PC-3 (cell line): ENCODE measurements at regions of chr3 and their contacts with region 1.

Region 1: DNA sequence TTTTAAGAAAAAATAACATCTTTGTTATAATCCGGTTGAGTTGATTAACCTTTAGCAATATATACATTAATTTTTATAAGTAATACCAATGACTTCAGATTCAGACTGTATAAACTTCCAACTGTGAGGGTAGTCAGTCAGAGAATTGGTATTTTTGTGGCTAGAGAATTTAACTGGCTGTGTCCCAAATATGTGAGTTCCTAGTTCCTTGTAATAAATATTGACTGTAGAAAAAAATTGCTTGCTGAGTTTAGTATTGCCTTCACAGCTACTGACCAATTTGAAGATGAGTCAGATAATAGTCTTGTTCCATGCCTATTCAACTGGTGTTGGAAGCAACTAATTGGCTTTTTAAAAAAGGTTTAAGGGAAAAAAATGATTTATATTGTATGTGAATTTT is 210.8 kb downstream of the GAP43 start:
- DNase-seq: peak; percentile 78
- ATAC-seq: peak; percentile 75
- H3K4me3 ChIP-seq: no peak overlapping the region
- H3K27ac ChIP-seq: no peak overlapping the region
- H3K4me1 ChIP-seq: peaks cover 13% of the 10 kb centered on the region
- H3K27me3 ChIP-seq: no peaks in the 10 kb centered on the region
- CTCF ChIP-seq: no peak

Region 2: DNA sequence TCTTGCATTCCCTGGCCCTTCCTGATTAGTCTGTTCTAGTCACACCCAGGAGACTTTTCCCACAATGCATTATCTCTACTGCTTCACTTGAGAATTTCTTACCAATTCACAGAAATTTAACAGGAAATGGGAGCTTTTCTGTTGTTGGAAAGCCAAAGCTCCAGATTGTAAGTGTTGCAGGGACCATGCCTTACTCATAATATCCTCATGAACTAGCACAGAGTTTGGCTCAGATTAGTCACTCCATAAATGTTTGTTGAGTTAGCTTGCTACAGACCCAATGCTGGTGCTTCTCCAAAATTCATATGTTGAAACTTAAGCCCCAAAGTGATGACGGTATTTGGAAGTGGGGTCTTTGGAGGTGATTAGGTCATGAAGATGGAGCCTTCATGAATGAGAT is 21.8 kb after region 1 on chr3:
- CTCF ChIA-PET with region 1: interaction called, 3 read pairs
- POLR2A ChIA-PET with region 1: interaction called, 3 read pairs
- intact Hi-C with region 1: loop called (anchors 2 kb)
- DNase-seq: peak; percentile 71
- ATAC-seq: peak; percentile 92
- H3K4me3 ChIP-seq: no peak overlapping the region
- H3K27ac ChIP-seq: peak overlapping the region; percentile 65
- H3K4me1 ChIP-seq: peaks cover 21% of the 10 kb centered on the region
- H3K27me3 ChIP-seq: no peaks in the 10 kb centered on the region
- CTCF ChIP-seq: no peak

Region 3: GRCh38 chr3:115913069-115913674 is 79.1 kb after region 1 on chr3:
- CTCF ChIA-PET with region 1: no interaction called
- POLR2A ChIA-PET with region 1: no interaction called
- intact Hi-C with region 1: loop called (anchors 1 kb)
- DNase-seq: peak; percentile 50
- ATAC-seq: peak; percentile 88
- H3K4me3 ChIP-seq: no peak overlapping the region
- H3K27ac ChIP-seq: no peak overlapping the region
- H3K4me1 ChIP-seq: no peaks in the 10 kb centered on the region
- H3K27me3 ChIP-seq: no peaks in the 10 kb centered on the region
- CTCF ChIP-seq: peak; percentile 77

Region 4: DNA sequence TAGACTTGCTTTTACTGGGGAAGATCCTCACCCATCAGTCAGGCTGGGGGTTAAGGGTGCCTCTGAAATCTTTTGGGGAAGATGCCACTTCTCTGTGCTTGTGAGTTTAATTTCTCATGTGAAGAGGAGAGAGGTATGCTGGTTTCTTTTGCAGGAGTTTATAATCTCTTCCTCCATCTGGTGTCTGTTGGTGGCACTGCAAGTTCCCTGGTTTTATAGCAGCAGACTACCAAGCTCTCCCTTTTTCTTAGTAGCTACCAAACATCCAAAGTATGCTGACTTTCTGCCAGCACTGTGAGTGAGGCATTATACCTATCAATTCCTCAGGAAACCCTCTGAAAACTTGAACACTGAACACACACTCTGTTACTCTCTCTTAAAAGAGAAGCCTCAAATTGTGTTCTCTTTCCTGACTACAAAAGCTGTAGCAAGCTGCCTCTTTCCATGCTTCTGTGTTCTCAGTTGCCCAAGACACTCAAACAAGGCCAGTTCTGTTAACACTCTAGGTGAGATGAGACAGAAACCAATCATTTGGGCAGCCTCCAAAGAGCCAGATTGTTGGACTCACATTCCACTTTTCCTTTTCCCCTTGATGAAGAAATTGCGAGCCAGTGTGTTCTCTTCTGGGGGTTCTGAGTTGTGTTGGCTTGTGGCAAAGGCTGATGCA is 88.7 kb after region 1 on chr3:
- CTCF ChIA-PET with region 1: interaction called, 10 read pairs
- POLR2A ChIA-PET with region 1: no interaction called
- intact Hi-C with region 1: loop called (anchors 1 kb)
- DNase-seq: peak; percentile 53
- ATAC-seq: peak; percentile 86
- H3K4me3 ChIP-seq: no peak overlapping the region
- H3K27ac ChIP-seq: no peak overlapping the region
- H3K4me1 ChIP-seq: no peaks in the 10 kb centered on the region
- H3K27me3 ChIP-seq: no peaks in the 10 kb centered on the region
- CTCF ChIP-seq: peak; percentile 71